Endothelial cell of umbilical vein (primary cell): ENCODE measurements at regions of chr5 and their contacts with region 1.

Region 1: DNA sequence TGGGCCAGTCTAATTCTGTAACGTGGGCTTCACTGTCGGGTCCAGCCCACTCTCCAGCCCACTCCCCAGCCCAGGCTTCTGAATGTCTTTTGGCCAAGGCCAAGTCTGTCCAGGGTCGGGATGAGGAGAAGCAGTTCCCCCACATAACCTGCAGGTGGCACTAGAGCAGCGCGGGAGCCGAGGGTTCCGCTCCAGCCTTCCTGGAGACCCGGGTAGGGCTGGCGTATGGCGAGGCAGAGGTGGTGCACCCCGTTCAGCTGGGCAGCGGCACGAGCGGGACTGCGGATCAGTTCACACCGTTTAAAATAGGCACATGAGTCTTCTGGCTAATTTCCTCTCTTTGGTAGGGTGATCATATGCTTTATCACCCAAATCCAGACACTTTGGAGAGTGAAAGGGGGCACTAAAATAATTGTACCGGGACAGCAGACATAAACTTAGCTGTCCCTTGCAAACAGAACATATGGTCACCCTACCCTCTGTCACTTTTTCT is 185.9 kb downstream of the MSX2 start:
- DNase-seq: peak; percentile 3
- H3K4me3 ChIP-seq: no peak overlapping the region
- H3K27ac ChIP-seq: no peak overlapping the region
- H3K4me1 ChIP-seq: no peaks in the 10 kb centered on the region
- H3K27me3 ChIP-seq: no peaks in the 10 kb centered on the region
- CTCF ChIP-seq: peak; percentile 71 to 82
- POLR2A ChIP-seq: no peak

Region 2: DNA sequence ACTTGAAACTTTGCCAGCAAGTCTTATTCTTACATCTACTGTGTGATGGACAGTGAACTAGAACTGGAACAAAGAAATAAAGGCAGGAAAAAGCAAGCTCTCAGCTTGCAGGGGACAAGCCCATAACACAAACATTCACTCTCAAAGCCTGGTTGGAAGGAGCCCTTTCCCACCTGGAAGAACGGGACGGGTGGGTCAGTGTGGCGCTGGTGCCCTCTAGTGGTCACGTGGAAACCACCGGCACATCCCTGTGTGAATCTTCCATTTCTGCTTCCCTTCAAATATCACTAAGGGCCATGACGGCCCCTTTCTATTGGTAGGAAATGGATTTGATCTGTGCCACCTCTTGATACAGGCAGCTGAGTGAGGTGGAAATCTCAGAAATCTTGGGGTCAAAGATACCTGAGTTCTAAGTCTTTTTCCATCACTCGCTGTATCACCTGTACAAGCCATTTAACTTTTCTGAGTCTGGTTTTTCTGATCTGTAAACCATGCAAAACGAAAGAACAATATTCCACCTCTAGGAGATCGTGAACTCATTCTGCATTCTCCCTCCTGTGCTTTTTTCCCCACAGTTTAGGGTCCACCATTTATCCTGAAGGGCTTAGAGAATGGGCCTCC is 25.7 kb after region 1 on chr5:
- CTCF ChIA-PET with region 1: no interaction called
- POLR2A ChIA-PET with region 1: no interaction called
- dilution Hi-C with region 1: no loop called
- intact Hi-C with region 1: loop called (anchors 1 kb)
- DNase-seq: peak; percentile 14
- H3K4me3 ChIP-seq: no peak overlapping the region
- H3K27ac ChIP-seq: no peak overlapping the region
- H3K4me1 ChIP-seq: no peaks in the 10 kb centered on the region
- H3K27me3 ChIP-seq: no peaks in the 10 kb centered on the region
- CTCF ChIP-seq: peak; percentile 78 to 86
- POLR2A ChIP-seq: no peak

Region 3: DNA sequence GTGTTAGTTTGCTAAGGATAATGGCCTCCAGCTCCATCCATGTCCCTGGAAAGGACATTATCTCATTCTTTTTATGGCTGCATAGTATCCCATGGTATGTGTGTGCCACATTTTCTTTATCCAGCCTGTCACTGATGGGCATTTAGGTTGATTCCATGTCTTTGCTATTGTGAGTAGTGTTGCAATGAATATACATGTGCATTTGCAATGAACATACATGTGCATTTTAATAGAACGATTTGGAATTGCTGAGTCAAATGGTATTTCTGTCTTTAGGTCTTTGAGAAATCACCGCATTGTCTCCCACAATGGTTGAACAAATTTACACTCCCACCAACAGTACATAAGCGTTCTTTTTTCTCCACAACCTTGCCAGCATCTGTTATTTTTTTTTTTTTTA is 496.0 kb after region 1 on chr5:
- CTCF ChIA-PET with region 1: no interaction called
- POLR2A ChIA-PET with region 1: no interaction called
- dilution Hi-C with region 1: no loop called
- intact Hi-C with region 1: no loop called
- DNase-seq: no peak
- H3K4me3 ChIP-seq: no peak overlapping the region
- H3K27ac ChIP-seq: no peak overlapping the region
- H3K4me1 ChIP-seq: no peaks in the 10 kb centered on the region
- H3K27me3 ChIP-seq: no peaks in the 10 kb centered on the region
- CTCF ChIP-seq: no peak
- POLR2A ChIP-seq: no peak

Region 4: DNA sequence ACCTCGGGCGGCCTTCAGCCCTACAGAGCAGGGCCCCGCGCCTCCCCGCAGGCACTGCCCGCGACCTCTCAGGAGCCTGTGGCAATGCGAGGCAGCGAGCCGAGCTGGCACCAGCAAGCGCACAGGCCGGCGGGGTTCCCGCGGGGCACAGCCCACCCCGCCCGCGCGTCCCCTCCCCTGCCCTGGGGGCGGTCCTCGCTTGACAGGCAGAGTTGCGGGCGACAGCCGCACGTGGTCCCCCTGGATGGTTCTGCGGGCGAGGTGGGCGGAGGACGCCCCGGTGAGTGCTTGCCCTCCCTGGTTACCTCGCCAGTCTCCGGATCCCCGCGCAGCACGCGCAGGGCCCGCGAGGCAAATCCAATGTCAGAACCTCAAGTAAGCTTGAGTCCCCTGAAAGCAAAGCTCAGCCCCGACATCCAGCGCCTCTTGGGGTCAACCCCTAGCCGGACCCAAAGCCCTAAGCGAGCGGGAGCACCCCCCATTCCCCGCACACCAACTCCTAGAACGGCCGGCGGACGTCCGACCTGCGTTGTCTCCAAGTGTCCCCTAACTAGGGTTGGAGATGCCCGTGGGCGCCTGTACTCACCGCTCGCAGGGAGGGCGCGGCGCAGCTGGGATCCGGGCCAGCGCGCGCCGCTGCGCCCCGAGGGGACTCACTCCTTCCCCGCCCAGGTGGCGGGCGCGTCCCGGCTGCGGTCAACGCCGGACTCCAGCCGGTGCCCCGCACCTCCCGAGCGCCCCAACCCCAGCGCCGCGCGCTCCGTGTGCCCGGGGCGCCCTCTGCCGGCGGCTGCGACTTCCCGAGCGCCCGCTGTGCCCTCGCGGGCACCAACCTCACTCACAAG is 534.0 kb after region 1 on chr5 and contains the start of gene DRD1:
- CTCF ChIA-PET with region 1: no interaction called
- POLR2A ChIA-PET with region 1: no interaction called
- dilution Hi-C with region 1: no loop called
- intact Hi-C with region 1: loop called (anchors 5 kb)
- DNase-seq: peak; percentile 20
- H3K4me3 ChIP-seq: no peak within 1 kb of the TSS
- H3K27ac ChIP-seq: no peak within 1 kb of the TSS
- H3K4me1 ChIP-seq: no peaks in the 10 kb centered on the region
- H3K27me3 ChIP-seq: peaks cover 5 to 8% of the 10 kb centered on the region in 2 experiments
- CTCF ChIP-seq: peak; percentile 51
- POLR2A ChIP-seq: no peak
- total RNA-seq, gene DRD1: not detected in 2 replicates